SK-N-SH (cell line): ENCODE measurements at regions of chr3 and their contacts with region 1.

Region 1: DNA sequence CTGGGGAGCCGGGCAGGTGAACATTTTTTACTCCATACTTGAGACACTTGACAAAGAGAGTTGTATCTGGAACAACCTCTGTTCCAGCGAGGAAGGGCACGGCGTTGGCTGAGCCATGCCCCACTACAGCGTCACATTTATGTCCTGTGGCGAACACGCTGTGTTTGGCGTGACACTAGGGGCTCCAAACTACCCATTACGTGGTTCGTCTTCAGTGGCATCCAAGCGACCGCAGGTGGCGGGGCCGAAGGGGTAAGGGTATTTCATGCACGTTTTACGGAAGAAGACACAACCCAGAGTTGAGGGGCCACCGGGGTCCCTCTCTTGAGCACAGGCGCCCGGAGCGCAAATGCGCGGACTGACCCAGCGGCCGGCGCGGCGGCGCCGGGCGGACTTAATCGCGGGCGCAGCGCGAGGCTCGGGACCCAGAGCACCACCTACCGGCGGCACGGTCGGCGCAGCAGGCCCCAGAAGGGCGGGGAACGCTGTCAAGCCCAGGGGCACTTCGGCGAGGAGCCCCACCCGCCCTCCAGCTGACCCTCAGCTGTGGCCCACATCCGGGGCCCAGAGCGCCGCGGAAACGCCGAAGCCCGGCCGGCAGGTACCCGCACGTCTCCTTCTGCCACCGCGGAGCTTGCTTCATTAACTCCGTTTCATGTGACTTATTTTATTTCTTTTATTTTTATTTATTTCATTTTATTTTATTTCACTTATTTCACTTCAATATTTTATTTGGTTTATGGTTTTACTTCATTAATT is 36.4 kb upstream of the TRIM71 start:
- DNase-seq: peak; percentile 95
- H3K4me3 ChIP-seq: peak overlapping the region; percentile 51 to 86
- H3K27ac ChIP-seq: no peak overlapping the region
- H3K4me1 ChIP-seq: no peaks in the 10 kb centered on the region; a peak in 1 of 4 replicates
- H3K27me3 ChIP-seq: no peaks in the 10 kb centered on the region
- CTCF ChIP-seq: peak; percentile 73
- EP300 ChIP-seq: 0 out of 4 replicates have a peak, but pooled peaks of 1 of the 2 experiments have one; percentile 5
- RAD21 ChIP-seq: peak; percentile 48

Region 2: DNA sequence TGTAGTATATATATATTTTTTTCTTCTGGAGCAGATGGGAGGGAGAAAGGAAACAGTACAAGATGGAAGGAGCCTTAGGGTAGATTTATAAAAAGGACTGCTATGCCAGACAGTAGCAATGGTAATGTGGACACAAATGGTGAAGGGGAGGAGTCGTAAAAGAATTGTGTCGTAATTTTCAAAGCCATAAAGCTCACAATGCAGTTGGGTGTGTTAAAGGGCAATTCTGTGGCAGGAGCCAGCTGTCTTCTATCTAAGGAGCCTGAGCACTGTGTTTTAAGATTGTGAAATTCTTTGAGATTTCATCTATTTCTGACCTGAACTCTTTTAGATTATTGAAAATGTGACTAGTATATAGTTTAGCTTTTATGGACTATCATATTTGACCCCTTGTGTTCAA is 37.5 kb before region 1 on chr3:
- CTCF ChIA-PET with region 1: interaction called, 11 read pairs
- POLR2A ChIA-PET with region 1: no interaction called
- DNase-seq: no peak
- H3K4me3 ChIP-seq: no peak overlapping the region
- H3K27ac ChIP-seq: no peak overlapping the region
- H3K4me1 ChIP-seq: no peaks in the 10 kb centered on the region
- H3K27me3 ChIP-seq: no peaks in the 10 kb centered on the region
- CTCF ChIP-seq: no peak
- EP300 ChIP-seq: no peak
- RAD21 ChIP-seq: no peak

Region 3: DNA sequence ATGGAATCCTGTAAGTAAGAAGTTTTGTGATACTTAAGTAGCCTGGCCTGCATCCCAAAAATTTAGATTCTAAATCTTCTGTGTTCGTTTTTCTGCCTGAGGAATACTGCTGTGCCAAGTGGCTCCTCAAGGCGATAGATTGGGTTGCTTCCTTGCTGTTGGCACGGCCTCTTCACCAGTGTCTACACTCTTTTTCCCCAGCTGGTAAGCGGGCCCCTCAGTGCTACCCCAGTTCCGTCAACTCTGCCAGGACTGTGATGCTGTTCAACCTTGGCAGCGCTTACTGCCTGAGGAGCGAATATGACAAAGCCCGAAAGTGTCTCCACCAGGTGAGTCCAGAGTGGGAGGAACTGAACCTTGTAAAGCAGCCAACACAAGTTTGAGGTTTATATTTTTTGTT is 16.9 kb before region 1 on chr3:
- CTCF ChIA-PET with region 1: interaction called, 18 read pairs
- POLR2A ChIA-PET with region 1: interaction called, 4 read pairs
- DNase-seq: no peak
- H3K4me3 ChIP-seq: no peak overlapping the region
- H3K27ac ChIP-seq: no peak overlapping the region
- H3K4me1 ChIP-seq: no peaks in the 10 kb centered on the region
- H3K27me3 ChIP-seq: no peaks in the 10 kb centered on the region
- CTCF ChIP-seq: no peak
- EP300 ChIP-seq: no peak
- RAD21 ChIP-seq: no peak

Region 4: GRCh38 chr3:32794487-32795308 is 13.3 kb after region 1 on chr3:
- CTCF ChIA-PET with region 1: interaction called, 10 read pairs
- POLR2A ChIA-PET with region 1: interaction called, 3 read pairs
- DNase-seq: no peak
- H3K4me3 ChIP-seq: no peak overlapping the region
- H3K27ac ChIP-seq: no peak overlapping the region
- H3K4me1 ChIP-seq: no peaks in the 10 kb centered on the region
- H3K27me3 ChIP-seq: no peaks in the 10 kb centered on the region
- CTCF ChIP-seq: no peak
- EP300 ChIP-seq: no peak
- RAD21 ChIP-seq: no peak